Dorsolateral prefrontal cortex (tissue), 120 donors: ENCODE measurements at regions of chr1 and their contacts with region 1.

Region 1: DNA sequence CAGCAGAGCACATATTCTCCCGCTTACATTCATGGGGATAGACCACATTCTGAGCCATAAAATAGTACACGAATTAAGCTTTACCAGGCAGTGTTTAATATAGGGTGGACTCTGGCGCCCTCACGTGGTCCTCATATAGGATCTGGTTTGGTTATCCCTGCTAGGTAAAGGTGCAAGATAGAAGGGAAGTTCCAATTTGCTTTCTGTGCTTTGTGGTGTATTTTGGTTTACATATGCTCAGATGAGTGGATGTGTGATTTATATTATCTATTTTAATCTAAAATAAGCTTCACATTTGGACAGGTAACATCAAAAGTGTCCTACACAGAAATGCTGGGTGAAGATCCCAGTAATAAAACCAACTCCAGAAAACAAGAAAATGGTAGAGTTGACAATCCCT is 3.6 kb downstream of the CR1 start:
- DNase-seq: peak; percentile 48 to 89 (median 73)
- H3K4me3 ChIP-seq: no peak overlapping the region
- H3K27ac ChIP-seq: peak overlapping the region in 1 of 59 donors; percentile 26
- H3K27me3 ChIP-seq: peaks cover 0 to 32% (median 13%) of the 10 kb centered on the region in 45 donors
- CTCF ChIP-seq: peak; percentile 2 to 90 (median 77)

Region 2: DNA sequence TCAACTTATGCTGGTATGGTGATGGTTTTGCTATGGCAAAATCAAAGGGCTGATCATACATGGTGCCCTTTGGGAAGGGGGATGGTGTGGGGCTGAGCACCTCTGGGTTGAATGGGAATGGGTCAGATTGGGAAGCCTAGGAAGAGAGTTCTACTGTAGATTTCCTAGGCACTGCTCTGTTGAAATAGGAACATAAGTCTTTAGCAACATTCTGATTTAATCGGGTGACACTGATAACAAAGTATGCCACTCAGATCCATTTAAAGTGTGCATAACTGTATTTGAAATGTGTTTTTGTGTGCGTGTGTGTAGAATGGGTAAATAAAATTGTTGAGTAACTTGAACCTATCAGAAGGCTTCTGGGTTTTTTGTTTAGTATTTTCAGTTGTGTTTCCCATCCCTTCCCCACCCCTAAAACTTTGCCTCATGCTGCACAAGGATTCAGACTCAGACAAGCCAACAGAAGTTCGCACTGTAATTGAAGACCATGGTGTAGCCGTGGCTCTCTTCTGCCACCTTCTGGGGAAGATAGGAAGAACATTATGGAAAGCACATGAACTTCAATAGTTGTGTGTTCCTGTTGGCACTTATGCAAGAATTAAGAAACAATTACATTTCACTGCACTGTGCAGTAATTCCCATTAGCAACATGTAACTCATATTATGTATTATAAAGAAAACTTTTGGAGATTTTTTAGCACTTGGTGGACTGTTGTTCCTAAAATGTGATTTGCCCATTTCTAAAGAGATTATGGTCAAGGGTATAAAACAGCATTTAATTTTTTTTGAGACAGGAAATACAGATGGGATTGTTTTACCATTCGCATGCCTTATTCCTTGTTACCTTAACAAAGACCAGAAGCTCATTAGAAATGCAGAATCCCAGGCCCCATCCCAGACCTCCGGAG is 421.8 kb before region 1 on chr1:
- intact Hi-C with region 1: loop called in 1 of 2 experiments (anchors 5 kb)
- DNase-seq: peak in 5 of 10 donors; percentile 31 to 71 (median 48)
- H3K4me3 ChIP-seq: no peak overlapping the region
- H3K27ac ChIP-seq: peak overlapping the region in 6 of 59 donors; percentile 2 to 22 (median 16)
- H3K27me3 ChIP-seq: no peaks in the 10 kb centered on the region
- CTCF ChIP-seq: peak; percentile 54 to 96 (median 87)

Region 3: DNA sequence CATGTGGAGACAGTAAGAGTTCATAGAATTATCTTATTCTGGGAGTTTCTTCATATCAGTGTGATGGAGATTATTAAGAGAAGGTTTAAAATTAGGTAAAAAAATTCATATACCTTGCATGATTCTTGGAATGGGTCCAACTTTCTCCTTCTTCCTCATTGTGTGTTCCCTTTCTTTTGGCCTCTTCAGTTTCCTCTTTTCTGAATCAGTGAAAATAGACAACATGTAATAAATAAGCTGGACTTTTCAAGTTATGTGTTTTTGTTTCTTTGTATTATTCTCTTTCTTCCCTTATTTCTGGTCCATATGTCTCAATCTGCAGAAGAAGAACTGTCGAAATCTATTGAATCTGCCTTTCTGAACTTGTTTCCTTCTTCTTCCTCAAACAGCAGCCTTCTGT is 365.0 kb before region 1 on chr1:
- intact Hi-C with region 1: no loop called
- DNase-seq: no peak
- H3K4me3 ChIP-seq: no peak overlapping the region
- H3K27ac ChIP-seq: no peak overlapping the region
- H3K27me3 ChIP-seq: no peaks in the 10 kb centered on the region
- CTCF ChIP-seq: no peak

Region 4: DNA sequence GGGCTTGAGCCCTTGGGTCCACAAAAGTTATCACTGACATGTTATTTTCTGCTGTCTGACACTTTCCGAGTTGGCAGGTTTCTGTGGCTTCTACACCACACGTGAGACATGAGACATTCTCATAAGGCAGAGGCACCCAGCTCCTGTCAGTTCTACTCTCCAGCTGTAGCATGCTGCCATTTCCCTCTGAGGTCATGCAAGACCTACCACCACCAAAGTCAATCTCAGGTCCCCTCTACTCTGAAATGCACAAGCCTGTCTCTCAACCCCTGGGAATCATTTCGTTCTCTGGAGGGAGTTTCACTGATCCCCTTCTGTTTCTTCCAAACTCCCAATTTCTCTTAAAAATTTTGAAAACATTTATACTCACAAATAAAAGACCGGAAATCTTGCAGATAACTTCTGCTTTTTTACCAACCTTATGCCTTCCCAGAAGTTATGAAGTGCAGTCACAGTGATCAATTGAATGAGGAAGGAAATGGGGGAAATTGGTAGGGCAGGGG is 84.9 kb before region 1 on chr1:
- intact Hi-C with region 1: loop called in 1 of 2 experiments (anchors 5 kb)
- DNase-seq: no peak
- H3K4me3 ChIP-seq: no peak overlapping the region
- H3K27ac ChIP-seq: no peak overlapping the region
- H3K27me3 ChIP-seq: peaks cover 0 to 3% (median 0%) of the 10 kb centered on the region in 45 donors
- CTCF ChIP-seq: no peak